Natural killer cell (primary cell): ENCODE measurements at regions of chr17 and their contacts with region 1.

Region 1: DNA sequence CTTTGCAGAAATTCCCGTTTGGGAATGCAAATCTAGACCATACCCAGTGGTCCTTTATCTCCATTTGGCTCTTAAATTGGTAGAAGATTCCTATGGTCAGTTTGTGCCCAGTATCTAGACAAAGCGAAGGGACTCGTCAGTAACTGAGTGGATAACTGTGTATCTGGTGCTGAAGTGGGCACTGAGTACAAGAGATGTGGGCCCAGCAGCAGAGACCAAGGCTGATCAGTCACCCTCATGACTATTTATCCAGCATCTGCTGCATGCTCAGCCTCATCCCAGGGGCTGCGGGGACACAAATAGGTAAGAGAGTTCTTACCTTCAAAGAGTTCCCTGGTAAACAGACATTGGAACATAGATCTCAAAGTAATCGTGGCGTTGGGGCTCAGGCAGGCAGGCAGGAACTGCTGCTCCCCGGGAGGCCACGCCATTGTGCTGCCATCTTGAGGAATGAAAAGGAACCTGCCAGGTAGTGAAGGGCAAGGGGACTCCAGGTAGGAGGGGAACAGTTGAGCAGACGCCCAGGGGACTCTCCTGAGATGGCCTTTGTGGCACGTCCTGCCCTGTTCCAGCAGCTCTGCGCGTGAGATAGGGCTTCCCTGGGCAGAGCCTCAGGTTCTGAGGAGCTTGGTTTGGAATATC is 10.3 kb downstream of the NT5M start:
- DNase-seq: peak; percentile 56 to 87
- ATAC-seq: peak; percentile 85 to 99 (median 98)
- H3K4me3 ChIP-seq: no peak overlapping the region
- H3K4me3 Mint-ChIP-seq: no peak overlapping the region
- H3K27ac ChIP-seq: no peak overlapping the region
- H3K27ac Mint-ChIP-seq: no peak overlapping the region
- H3K4me1 ChIP-seq: peaks cover 10% of the 10 kb centered on the region
- H3K4me1 Mint-ChIP-seq: peaks cover 0 to 5% of the 10 kb centered on the region in 2 donors
- H3K27me3 ChIP-seq: no peaks in the 10 kb centered on the region
- H3K27me3 Mint-ChIP-seq: no peaks in the 10 kb centered on the region
- CTCF ChIP-seq: peak; percentile 64

Region 2: GRCh38 chr17:17001874-17002520 is 311.5 kb before region 1 on chr17:
- intact Hi-C with region 1: loop called (anchors 1 kb)
- DNase-seq: peak; percentile 75 to 86
- ATAC-seq: peak; percentile 81 to 100 (median 99)
- H3K4me3 ChIP-seq: no peak overlapping the region
- H3K4me3 Mint-ChIP-seq: no peak overlapping the region
- H3K27ac ChIP-seq: no peak overlapping the region
- H3K27ac Mint-ChIP-seq: no peak overlapping the region
- H3K4me1 ChIP-seq: peaks cover 8% of the 10 kb centered on the region
- H3K4me1 Mint-ChIP-seq: peaks cover 0 to 5% of the 10 kb centered on the region in 2 donors
- H3K27me3 ChIP-seq: no peaks in the 10 kb centered on the region
- H3K27me3 Mint-ChIP-seq: peaks cover 0 to 2% of the 10 kb centered on the region in 2 donors
- CTCF ChIP-seq: peak; percentile 97

Region 3: DNA sequence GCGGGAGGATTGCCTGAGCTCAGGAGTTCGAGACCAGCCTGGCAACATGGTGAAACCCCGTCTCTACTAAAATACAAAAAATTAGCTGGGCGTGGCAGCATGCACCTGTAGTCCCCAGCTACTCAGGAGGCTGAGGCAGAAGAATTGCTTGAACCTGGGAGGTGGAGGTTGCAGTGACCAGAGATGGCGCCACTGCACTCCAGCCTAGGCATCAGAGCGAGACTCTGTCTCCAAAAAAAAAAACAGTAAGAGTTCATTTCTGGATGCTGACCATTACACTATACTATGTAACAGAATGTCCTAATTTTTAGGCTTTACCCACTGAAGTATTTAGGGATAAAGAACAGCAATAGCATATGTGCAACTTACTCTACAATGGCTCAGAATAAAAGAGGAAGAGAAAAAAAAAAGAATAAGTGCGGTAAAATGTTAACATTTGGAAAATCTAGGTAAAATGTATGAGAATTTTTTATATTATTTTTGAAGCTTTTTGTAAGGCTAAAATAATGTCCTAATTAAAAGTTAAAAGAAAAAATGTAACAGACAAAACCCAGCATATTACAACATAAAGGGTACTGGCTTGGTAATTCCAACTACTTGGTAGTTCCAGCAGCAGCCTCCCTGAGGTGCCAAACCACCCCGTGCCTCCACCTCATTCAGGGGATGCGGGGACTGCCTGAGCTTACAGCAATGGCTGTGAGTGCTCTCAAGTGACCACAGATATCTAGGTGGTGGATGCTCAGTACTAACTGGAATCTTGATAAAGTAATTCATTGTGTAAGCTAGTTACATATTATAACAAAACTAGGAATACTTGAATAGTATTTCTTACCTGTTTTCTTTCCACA is 43.3 kb before region 1 on chr17:
- intact Hi-C with region 1: loop called (anchors 5 kb)
- DNase-seq: peak in 1 of 2 donors; percentile 44
- ATAC-seq: no peak
- H3K4me3 ChIP-seq: no peak overlapping the region
- H3K4me3 Mint-ChIP-seq: no peak overlapping the region
- H3K27ac ChIP-seq: no peak overlapping the region
- H3K27ac Mint-ChIP-seq: peak overlapping the region in 1 of 2 donors; percentile 6
- H3K4me1 ChIP-seq: no peaks in the 10 kb centered on the region
- H3K4me1 Mint-ChIP-seq: no peaks in the 10 kb centered on the region
- H3K27me3 ChIP-seq: no peaks in the 10 kb centered on the region
- H3K27me3 Mint-ChIP-seq: no peaks in the 10 kb centered on the region
- CTCF ChIP-seq: peak; percentile 37

Region 4: GRCh38 chr17:17280613-17281549 is 32.6 kb before region 1 on chr17 and contains the start of gene COPS3:
- intact Hi-C with region 1: loop called (anchors 2 kb)
- DNase-seq: peak; percentile 96 to 99
- ATAC-seq: peak; percentile 87 to 96 (median 91)
- H3K4me3 ChIP-seq: peak within 1 kb of the TSS; percentile 84
- H3K4me3 Mint-ChIP-seq: peak within 1 kb of the TSS; percentile 93
- H3K27ac ChIP-seq: peak within 1 kb of the TSS; percentile 88
- H3K27ac Mint-ChIP-seq: peak within 1 kb of the TSS; percentile 91 to 94
- H3K4me1 ChIP-seq: peaks cover 25% of the 10 kb centered on the region
- H3K4me1 Mint-ChIP-seq: peaks cover 23 to 37% of the 10 kb centered on the region in 2 donors
- H3K27me3 ChIP-seq: no peaks in the 10 kb centered on the region
- H3K27me3 Mint-ChIP-seq: no peaks in the 10 kb centered on the region
- CTCF ChIP-seq: no peak
- total RNA-seq, gene COPS3: 101 to 115 (median 102) TPM